ENCODE measurements at regions of chr12 and their contacts with region 1.

Region 1: DNA sequence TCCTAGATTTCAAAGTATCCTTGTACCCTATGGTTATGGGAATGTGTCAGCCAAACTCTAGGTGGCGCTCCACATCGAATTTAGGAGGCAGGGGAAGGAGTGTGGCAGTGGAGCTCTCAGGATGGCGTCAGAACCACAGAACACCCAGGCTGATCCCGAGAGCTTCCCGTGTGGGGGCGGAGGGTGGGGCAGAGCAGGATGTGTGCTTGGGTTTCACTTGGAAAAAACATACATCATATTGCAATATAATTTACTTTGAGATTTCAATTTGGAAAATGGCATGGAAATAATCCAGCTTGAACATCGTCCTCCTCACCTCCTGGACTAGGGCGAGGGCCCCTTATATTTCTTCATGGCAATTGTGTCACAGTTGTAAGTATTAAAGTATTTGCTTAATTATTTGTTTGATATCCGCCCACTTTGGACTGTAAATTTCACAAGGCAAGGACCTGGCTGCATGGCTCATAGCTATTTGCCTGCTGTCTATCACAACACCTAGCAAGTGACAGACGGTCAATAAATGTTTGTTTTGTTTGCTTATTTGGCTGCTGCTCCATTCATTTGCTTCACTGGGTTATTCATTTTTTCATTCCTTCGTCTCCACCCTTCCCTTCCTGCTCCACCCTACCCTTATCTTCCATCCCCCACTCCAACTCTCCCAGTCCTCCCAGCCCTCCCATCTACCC is 221.5 kb upstream of the HMGA2 start:
- DNase-seq: peak; percentile 87
- H3K4me3 ChIP-seq: peak overlapping the region; percentile 59
- H3K27ac ChIP-seq: peak overlapping the region; percentile 83
- H3K27me3 ChIP-seq: no peaks in the 10 kb centered on the region
- CTCF ChIP-seq: peak; percentile 86

Region 2: DNA sequence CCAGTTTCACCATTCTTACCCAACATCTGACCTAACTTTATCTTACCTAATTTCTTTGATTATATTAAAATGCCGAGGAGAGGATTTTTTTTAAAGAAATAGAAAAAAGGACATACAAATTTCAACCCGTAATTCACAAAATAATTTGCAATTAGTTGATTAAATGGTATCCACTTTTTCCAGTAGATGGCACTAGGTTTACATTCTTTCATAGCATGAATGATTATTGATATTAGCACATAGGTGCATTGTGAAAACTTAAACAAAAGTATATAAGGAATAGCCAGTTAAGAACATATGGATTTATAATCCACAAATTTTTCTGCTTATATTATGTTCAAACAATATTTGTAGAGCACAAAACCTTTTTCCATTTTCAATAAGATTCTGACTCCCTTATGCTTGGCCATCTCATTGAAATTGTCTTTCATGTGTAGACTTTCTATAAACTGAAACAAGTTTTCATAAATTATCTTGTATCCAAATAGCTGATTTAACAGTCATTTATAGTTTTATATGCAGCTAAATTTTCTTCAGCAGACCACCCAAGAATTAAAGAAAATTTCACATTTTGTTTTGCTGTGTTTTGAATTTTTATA is 288.9 kb before region 1 on chr12:
- CTCF ChIA-PET with region 1: interaction called, 27 read pairs
- POLR2A ChIA-PET with region 1: no interaction called
- DNase-seq: no peak
- H3K4me3 ChIP-seq: no peak overlapping the region
- H3K27ac ChIP-seq: no peak overlapping the region
- H3K27me3 ChIP-seq: no peaks in the 10 kb centered on the region
- CTCF ChIP-seq: peak; percentile 55

Region 3: GRCh38 chr12:65574878-65575277 is 27.9 kb before region 1 on chr12:
- CTCF ChIA-PET with region 1: interaction called, 10 read pairs
- POLR2A ChIA-PET with region 1: no interaction called
- DNase-seq: no peak
- H3K4me3 ChIP-seq: no peak overlapping the region
- H3K27ac ChIP-seq: no peak overlapping the region
- H3K27me3 ChIP-seq: no peaks in the 10 kb centered on the region
- CTCF ChIP-seq: no peak

Region 4: DNA sequence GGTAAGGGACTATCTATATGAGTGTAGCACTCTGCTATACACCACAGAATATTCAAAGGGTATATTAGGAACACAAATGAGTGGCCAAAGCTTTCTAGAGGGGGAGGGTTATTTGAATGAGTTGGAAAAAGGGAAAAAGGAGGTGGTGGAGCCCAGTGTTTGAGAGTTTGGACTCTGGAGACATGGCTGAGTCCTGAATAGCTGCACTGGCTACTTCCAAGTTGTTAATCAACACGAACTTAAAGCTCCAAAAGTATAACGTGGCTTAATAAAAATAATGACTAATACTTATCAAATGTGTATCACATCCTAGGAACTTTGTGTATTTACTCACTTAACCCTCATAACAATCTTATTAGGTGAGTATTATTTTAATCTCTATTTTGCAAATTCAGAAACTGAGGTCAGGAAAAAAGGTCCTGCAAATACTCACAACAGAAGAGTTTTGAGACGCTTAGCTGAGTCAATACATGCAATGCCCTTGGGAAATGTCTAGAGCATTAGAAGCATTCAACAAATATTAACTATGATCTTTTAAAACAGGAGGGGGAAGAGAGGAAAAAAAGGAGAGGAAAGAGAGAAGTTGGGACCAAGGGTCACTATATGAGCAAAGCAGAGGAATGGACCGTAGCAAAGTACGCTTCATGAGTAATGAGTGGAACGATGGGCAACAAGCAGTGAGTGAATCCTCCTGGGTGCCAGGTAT is 32.0 kb after region 1 on chr12:
- CTCF ChIA-PET with region 1: interaction called, 10 read pairs
- POLR2A ChIA-PET with region 1: interaction called, 6 read pairs
- DNase-seq: no peak
- H3K4me3 ChIP-seq: no peak overlapping the region
- H3K27ac ChIP-seq: peak overlapping the region; percentile 73
- H3K27me3 ChIP-seq: no peaks in the 10 kb centered on the region
- CTCF ChIP-seq: no peak

Region 5: DNA sequence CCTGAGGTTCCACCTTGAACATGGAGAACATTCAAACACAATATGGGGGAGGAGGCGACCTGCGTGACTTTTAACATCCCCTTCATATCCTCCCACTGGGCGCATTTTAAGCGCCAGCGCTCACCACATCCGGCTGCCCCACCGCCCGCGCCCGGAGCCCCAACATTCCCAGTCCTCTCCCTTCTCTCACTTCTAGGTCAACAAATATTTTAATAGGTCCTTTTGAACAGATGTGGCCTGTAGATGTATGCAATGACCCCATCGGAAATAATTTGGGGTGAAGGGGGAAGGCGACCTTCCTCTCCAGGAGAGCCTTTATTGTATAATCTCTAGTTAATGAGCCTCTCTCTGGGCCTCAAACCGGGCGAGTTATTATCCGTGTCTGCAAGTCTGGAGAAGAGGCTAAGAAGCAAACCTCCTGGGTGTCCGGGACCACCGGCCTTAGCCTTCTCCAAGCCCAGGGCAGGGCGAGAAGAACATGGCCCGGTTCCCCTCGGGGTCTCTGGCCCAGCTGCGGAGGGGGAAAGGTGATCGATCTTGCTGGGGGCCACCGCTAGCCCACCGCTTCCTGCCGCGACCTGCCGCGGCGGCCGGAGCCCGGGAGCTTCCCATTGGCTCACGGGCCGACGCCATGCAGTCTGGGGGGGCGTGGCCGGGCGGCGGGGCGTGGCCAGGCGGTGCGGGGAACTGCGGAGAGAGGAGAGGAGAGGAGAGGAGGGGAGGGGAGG is 138.3 kb after region 1 on chr12:
- CTCF ChIA-PET with region 1: interaction called, 11 read pairs
- POLR2A ChIA-PET with region 1: interaction called, 10 read pairs
- DNase-seq: no peak
- H3K4me3 ChIP-seq: peak overlapping the region; percentile 86
- H3K27ac ChIP-seq: peak overlapping the region; percentile 78
- H3K27me3 ChIP-seq: no peaks in the 10 kb centered on the region
- CTCF ChIP-seq: no peak